ENCODE measurements at regions of chr3 and their contacts with region 1.

Region 1: GRCh38 chr3:103511891-103512290 is 1077.1 kb downstream of the ZPLD1 start:
- DNase-seq: no peak
- ATAC-seq: no peak
- H3K4me3 ChIP-seq: no peak overlapping the region
- H3K27ac ChIP-seq: no peak overlapping the region
- H3K4me1 ChIP-seq: no peaks in the 10 kb centered on the region
- H3K27me3 ChIP-seq: no peaks in the 10 kb centered on the region
- CTCF ChIP-seq: no peak
- POLR2A ChIP-seq: no peak

Region 2: GRCh38 chr3:103499132-103499900 is 12.6 kb before region 1 on chr3:
- intact Hi-C with region 1: loop called in 1 of 10 experiments (anchors 2 kb)
- DNase-seq: no peak
- ATAC-seq: no peak
- H3K4me3 ChIP-seq: no peak overlapping the region
- H3K27ac ChIP-seq: no peak overlapping the region
- H3K4me1 ChIP-seq: no peaks in the 10 kb centered on the region
- H3K27me3 ChIP-seq: no peaks in the 10 kb centered on the region
- CTCF ChIP-seq: no peak
- POLR2A ChIP-seq: no peak

Region 3: DNA sequence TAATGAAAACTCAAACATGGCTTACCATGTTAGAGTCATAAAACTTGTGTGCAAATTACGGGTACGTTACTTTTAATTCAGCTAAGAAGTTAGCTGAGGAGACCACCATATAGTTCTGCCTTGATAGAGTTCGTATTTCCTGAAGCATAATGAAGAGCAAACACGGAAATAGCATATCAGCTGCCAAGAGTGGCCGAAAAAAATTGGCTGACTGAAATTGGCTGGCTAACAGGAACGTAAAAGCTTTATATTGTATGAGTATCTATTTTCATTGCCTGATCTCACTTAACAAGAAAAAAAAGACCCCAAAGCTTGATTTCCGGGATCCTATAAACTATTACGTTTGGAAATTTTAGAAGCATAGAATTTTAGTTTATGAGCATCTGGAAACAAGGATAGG is 145.9 kb after region 1 on chr3:
- intact Hi-C with region 1: no loop called
- DNase-seq: no peak
- ATAC-seq: no peak
- H3K4me3 ChIP-seq: no peak overlapping the region
- H3K27ac ChIP-seq: no peak overlapping the region
- H3K4me1 ChIP-seq: no peaks in the 10 kb centered on the region
- H3K27me3 ChIP-seq: no peaks in the 10 kb centered on the region
- CTCF ChIP-seq: no peak
- POLR2A ChIP-seq: no peak

Measured in heart left ventricle (tissue), 16 donors.